Activated CD4-positive, alpha-beta memory T cell treated with anti-CD3 and anti-CD28 coated beads, Interleukin-2, amount 10 ng/mL, durations not matched to agents 7 days and 5 days (primary cell): ENCODE measurements at regions of chr6 and their contacts with region 1.

Region 1: GRCh38 chr6:35468181-35468979 is at the start of gene RPL10A:
- DNase-seq: peak; percentile 97
- H3K4me3 Mint-ChIP-seq: peak within 1 kb of the TSS; percentile 87
- H3K27ac Mint-ChIP-seq: peak within 1 kb of the TSS; percentile 90
- H3K4me1 Mint-ChIP-seq: peaks cover 40% of the 10 kb centered on the region
- H3K27me3 Mint-ChIP-seq: no peaks in the 10 kb centered on the region
- total RNA-seq, gene RPL10A: 1,239 to 1,245 TPM

Region 2: DNA sequence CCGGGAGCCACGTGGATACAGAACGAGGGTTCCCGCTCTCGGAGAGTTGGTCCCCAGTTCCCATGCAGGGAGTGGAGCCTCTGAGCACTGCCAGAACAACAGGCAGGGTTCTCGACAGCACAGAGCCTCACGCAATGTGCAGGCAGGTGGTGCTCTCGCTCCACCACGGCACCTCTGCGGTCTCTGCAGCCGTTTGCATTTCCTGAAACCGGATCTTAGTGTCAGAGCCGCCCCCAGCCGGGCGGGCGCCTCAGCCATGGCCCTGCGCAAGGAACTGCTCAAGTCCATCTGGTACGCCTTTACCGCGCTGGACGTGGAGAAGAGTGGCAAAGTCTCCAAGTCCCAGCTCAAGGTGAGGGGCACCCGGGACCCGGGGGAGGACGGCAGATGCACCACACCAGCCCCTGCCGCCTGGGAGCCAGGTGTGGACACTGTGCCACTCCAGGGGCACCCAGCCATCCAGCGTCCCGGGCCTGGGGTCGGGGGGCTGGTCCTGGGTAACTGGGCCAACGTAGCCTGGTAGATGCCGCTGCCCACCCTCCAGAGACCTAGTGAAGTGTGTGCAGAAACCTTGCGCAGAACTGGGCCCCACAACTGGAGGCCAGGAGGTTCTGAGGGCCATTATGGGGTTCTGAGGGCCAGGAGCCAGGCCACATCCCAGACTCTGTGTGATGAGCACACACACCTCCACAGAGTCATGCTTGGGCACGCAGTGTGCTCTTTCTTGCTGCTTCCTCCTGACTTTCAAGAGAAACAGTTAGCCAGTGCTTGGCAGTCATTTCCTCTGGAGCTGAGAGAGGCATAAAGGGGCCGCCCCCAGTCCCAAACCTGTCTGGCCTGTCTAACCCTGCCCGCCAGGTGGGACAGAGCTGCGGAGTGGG is 170.5 kb before region 1 on chr6 and contains the start of gene DEF6:
- CTCF ChIA-PET with region 1: interaction called, 37 read pairs
- POLR2A ChIA-PET with region 1: interaction called, 19 read pairs
- DNase-seq: peak; percentile 94
- H3K4me3 Mint-ChIP-seq: peak within 1 kb of the TSS; percentile 79
- H3K27ac Mint-ChIP-seq: peak within 1 kb of the TSS; percentile 95
- H3K4me1 Mint-ChIP-seq: peaks cover 50% of the 10 kb centered on the region
- H3K27me3 Mint-ChIP-seq: no peaks in the 10 kb centered on the region
- total RNA-seq, gene DEF6: 201 to 215 TPM

Region 3: GRCh38 chr6:35342258-35343091 is 125.9 kb before region 1 on chr6 and contains the start of gene PPARD:
- CTCF ChIA-PET with region 1: interaction called, 23 read pairs
- POLR2A ChIA-PET with region 1: interaction called, 7 read pairs
- DNase-seq: peak; percentile 98
- H3K4me3 Mint-ChIP-seq: peak within 1 kb of the TSS; percentile 96
- H3K27ac Mint-ChIP-seq: peak within 1 kb of the TSS; percentile 79
- H3K4me1 Mint-ChIP-seq: peaks cover 45% of the 10 kb centered on the region
- H3K27me3 Mint-ChIP-seq: peaks cover 7% of the 10 kb centered on the region
- total RNA-seq, gene PPARD: 23.1 to 23.4 TPM

Region 4: GRCh38 chr6:35415065-35415991 is 53.1 kb before region 1 on chr6:
- CTCF ChIA-PET with region 1: interaction called, 3 read pairs
- POLR2A ChIA-PET with region 1: interaction called, 10 read pairs
- DNase-seq: peak; percentile 40
- H3K4me3 Mint-ChIP-seq: no peak overlapping the region
- H3K27ac Mint-ChIP-seq: peak overlapping the region; percentile 52
- H3K4me1 Mint-ChIP-seq: peaks cover 49% of the 10 kb centered on the region
- H3K27me3 Mint-ChIP-seq: no peaks in the 10 kb centered on the region

Region 5: DNA sequence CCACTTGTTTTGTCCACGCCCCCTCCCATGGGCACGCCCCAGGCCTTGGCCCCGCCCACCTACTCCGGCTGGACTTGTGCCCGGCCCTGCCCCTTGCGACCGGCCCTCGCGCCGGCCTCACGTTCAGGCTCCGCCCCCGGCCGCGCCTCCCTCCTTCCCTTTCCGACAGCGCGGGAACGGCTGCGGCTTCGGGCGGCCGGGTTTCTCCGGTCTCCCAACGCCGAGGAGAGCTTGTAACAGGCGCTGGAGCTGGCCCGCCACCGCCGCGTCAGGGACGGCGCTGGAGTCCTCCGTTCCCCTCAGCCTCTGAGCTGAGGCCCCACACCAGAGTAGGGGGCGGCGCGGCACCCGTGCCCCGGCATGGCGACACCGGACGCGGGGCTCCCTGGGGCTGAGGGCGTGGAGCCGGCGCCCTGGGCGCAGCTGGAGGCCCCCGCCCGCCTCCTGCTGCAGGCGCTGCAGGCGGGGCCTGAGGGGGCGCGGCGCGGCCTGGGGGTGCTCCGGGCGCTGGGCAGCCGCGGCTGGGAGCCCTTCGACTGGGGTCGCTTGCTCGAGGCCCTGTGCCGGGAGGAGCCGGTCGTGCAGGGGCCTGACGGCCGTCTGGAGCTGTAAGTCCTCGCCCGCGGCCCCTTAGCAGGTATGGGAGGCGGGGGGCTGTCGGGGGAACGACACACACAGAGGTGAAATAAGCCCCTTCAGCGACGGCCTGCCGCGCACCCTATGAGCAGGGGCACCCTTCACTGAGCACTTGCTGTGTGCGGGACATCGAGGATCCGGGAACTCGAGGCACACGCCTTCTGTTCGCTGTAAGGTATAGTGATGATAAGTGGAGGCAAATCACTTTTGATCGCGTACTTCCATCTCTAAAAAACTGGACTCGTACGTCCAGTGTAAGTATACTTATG is 15.9 kb before region 1 on chr6 and contains the start of gene FANCE:
- CTCF ChIA-PET with region 1: interaction called, 59 read pairs
- POLR2A ChIA-PET with region 1: interaction called, 44 read pairs
- DNase-seq: peak; percentile 95
- H3K4me3 Mint-ChIP-seq: peak within 1 kb of the TSS; percentile 82
- H3K27ac Mint-ChIP-seq: peak within 1 kb of the TSS; percentile 42
- H3K4me1 Mint-ChIP-seq: peaks cover 38% of the 10 kb centered on the region
- H3K27me3 Mint-ChIP-seq: peaks cover 5% of the 10 kb centered on the region
- total RNA-seq, gene FANCE: 10.3 to 10.4 TPM

Region 6: DNA sequence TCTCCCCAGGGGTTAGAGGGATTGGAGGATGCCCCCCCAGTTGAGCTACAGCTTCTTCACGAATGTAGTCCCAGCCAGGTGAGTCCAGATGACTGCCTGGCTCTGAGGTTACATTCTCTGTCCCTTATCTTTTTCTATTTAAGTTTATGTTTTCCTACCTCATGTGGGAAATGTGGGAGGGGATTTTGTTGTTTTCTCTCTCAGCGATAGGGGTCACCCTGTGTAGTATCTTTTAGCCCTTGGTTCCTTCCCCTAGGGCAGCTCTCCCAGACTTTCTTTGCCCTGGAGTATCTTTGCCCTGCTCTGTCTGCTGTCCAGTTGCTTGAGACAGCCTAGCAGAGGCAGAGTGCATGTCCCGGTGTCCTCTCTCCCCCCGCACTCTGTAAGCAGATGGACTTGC is 10.5 kb before region 1 on chr6:
- CTCF ChIA-PET with region 1: interaction called, 59 read pairs
- POLR2A ChIA-PET with region 1: interaction called, 44 read pairs
- DNase-seq: no peak
- H3K4me3 Mint-ChIP-seq: no peak overlapping the region
- H3K27ac Mint-ChIP-seq: no peak overlapping the region
- H3K4me1 Mint-ChIP-seq: peaks cover 20% of the 10 kb centered on the region
- H3K27me3 Mint-ChIP-seq: no peaks in the 10 kb centered on the region

Region 7: GRCh38 chr6:35480169-35480568 is 11.8 kb after region 1 on chr6:
- CTCF ChIA-PET with region 1: interaction called, 4 read pairs
- POLR2A ChIA-PET with region 1: interaction called, 18 read pairs
- DNase-seq: no peak
- H3K4me3 Mint-ChIP-seq: no peak overlapping the region
- H3K27ac Mint-ChIP-seq: no peak overlapping the region
- H3K4me1 Mint-ChIP-seq: peaks cover 1% of the 10 kb centered on the region
- H3K27me3 Mint-ChIP-seq: peaks cover 9% of the 10 kb centered on the region